PC-9 (cell line): ENCODE measurements at regions of chr18 and their contacts with region 1.

Region 1: GRCh38 chr18:45282101-45282812 is 333.0 kb upstream of the SLC14A2 start:
- DNase-seq: no peak
- H3K4me3 ChIP-seq: no peak overlapping the region
- H3K27ac ChIP-seq: no peak overlapping the region
- H3K4me1 ChIP-seq: no peaks in the 10 kb centered on the region
- H3K27me3 ChIP-seq: no peaks in the 10 kb centered on the region
- CTCF ChIP-seq: peak; percentile 20; the same call in 1 of the 2 replicates

Region 2: DNA sequence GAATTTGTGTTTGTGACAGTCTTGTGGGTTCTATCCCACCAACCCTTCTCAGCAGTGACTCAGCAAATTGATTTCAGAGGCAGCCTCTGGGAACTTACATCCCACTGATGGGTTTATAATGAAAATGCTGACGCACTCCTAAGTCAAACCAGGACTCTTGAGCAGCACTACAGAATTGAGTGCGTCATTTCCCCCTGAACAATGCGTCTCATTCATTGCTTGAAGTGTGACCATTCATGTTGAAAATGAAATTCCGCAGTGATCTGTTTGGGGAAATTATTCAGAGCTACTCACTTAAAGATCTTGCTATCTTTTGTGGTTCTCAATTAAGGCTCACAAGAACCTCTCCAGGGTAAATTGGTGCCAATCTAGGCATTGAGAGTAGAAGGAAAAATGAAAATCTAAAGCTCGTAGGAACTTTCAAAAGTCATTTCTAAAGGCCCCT is 84.7 kb before region 1 on chr18:
- CTCF ChIA-PET with region 1: no interaction called
- POLR2A ChIA-PET with region 1: no interaction called
- intact Hi-C with region 1: no loop called
- DNase-seq: no peak
- H3K4me3 ChIP-seq: no peak overlapping the region
- H3K27ac ChIP-seq: no peak overlapping the region
- H3K4me1 ChIP-seq: no peaks in the 10 kb centered on the region
- H3K27me3 ChIP-seq: no peaks in the 10 kb centered on the region
- CTCF ChIP-seq: no peak

Region 3: DNA sequence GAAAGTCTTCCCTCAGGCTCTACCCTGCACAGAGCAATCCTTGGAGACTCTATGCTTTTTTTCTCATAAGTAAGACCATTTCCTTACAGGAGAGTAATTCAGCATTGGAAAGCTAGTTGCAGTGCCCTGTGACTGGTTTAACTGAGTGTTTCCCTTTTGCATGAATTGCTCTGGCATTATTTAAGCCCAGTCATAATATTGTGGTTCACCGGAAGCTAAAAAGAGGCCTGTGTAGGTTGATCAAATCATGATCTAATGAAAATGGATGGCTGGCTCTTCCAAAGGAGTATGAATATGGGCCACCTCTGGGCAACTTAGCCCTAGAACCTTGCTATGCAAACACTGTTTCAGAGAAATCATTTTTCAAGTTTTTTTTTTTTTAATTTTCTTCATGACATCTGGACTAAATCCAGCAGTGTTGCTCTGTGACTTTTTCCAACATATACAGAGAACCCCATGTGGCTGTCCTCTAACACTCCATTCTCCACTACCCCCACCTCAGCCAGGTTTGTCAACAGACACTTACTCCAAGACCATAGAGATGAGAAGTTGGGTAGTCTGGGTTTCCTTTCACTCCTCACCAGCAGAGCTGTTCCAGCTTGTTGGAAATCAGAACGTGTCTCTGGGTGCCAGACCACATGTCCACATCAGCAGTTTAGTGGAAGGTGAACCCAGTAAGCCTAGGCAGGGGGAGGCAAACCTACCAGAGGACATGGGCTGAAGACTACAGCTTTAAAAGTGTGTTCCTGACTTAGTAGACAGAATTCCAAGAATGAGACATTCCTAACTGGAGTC is 157.8 kb after region 1 on chr18:
- CTCF ChIA-PET with region 1: no interaction called
- POLR2A ChIA-PET with region 1: no interaction called
- intact Hi-C with region 1: loop called (anchors 10 kb)
- DNase-seq: no peak
- H3K4me3 ChIP-seq: no peak overlapping the region
- H3K27ac ChIP-seq: no peak overlapping the region
- H3K4me1 ChIP-seq: no peaks in the 10 kb centered on the region
- H3K27me3 ChIP-seq: no peaks in the 10 kb centered on the region
- CTCF ChIP-seq: no peak